A549 (cell line): ENCODE measurements at regions of chr5 and their contacts with region 1.

Region 1: GRCh38 chr5:138282920-138283742 is 8.7 kb upstream of the GFRA3 start:
- DNase-seq: peak; percentile 44 to 76
- ATAC-seq: peak; percentile 97 to 98
- H3K4me3 ChIP-seq: no peak overlapping the region
- H3K27ac ChIP-seq: no peak overlapping the region
- H3K4me1 ChIP-seq: peaks cover 9% of the 10 kb centered on the region; the same call in 2 of the 3 replicates
- CTCF ChIP-seq: peak; percentile 61
- EP300 ChIP-seq: no peak
- POLR2A ChIP-seq: no peak
- RAD21 ChIP-seq: peak; percentile 65 to 79

Region 2: GRCh38 chr5:138178516-138179276 is 104.4 kb before region 1 on chr5 and contains the starts of genes BRD8 and KIF20A:
- CTCF ChIA-PET with region 1: interaction called, 41 read pairs
- POLR2A ChIA-PET with region 1: interaction called, 4 read pairs
- DNase-seq: peak; percentile 96 to 97
- ATAC-seq: peak; percentile 92 to 94
- H3K4me3 ChIP-seq: peak within 1 kb of the TSS; percentile 80
- H3K27ac ChIP-seq: peak within 1 kb of the TSS; percentile 76 to 92
- H3K4me1 ChIP-seq: peaks cover 15% of the 10 kb centered on the region
- CTCF ChIP-seq: no peak
- EP300 ChIP-seq: no peak
- POLR2A ChIP-seq: peak; percentile 80
- RAD21 ChIP-seq: no peak
- polyA plus RNA-seq, gene BRD8: 82.3 and 85.8 TPM in 2 replicates
- polyA plus RNA-seq, gene KIF20A: 37.4 and 42.2 TPM in 2 replicates

Region 3: GRCh38 chr5:138185957-138186447 is 97.1 kb before region 1 on chr5:
- CTCF ChIA-PET with region 1: interaction called, 41 read pairs
- POLR2A ChIA-PET with region 1: interaction called, 3 read pairs
- DNase-seq: no peak
- ATAC-seq: no peak
- H3K4me3 ChIP-seq: no peak overlapping the region
- H3K27ac ChIP-seq: no peak overlapping the region
- H3K4me1 ChIP-seq: no peaks in the 10 kb centered on the region
- CTCF ChIP-seq: no peak
- EP300 ChIP-seq: no peak
- POLR2A ChIP-seq: no peak
- RAD21 ChIP-seq: no peak

Region 4: DNA sequence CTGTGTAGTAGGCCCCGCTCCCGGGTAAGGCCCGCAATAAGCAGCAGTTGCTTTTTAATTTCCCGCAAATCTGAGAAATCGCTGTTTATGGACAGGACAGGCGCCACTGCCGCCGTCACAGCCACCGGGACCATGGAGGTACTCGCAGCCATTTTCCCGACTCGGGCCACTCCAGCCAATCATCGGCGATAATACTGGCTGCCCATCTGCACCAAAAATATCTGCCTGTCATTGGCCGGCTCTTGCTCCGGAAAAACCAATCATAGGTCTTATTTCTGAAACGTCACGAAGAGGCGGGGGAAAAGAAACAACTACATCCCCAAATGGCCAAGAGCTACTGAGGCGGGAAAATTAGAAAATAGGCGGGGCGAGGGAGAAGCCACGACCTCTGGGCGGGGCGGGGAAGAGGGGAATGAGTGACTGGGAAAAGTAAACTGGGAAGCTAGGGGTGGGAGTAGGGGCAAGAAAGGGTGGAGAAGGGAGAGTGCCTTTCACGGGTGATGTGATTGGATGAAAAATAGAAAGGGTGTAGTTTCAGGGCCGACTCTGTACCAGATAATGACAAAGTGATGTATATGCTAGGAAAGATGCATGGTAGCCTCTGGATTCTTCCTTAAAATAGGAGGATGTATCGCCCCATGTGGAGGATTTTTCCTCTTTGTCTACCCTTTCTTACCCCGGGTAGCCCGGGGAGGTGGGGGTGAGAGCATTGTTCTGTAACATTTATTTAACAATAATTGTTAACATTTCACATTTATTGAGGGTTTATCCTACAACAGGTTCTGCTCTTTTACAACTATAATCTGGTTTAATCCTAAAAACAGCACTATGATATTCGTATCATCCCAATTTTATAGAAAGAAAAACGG is 69.7 kb before region 1 on chr5 and contains the start of gene CDC23:
- CTCF ChIA-PET with region 1: interaction called, 11 read pairs
- POLR2A ChIA-PET with region 1: interaction called, 5 read pairs
- DNase-seq: peak; percentile 99 to 100
- ATAC-seq: peak; percentile 98 to 99
- H3K4me3 ChIP-seq: peak within 1 kb of the TSS; percentile 85
- H3K27ac ChIP-seq: peak within 1 kb of the TSS; percentile 80 to 91
- H3K4me1 ChIP-seq: peaks cover 6% of the 10 kb centered on the region; the same call in 2 of the 3 replicates
- CTCF ChIP-seq: no peak
- EP300 ChIP-seq: no peak
- POLR2A ChIP-seq: peak; percentile 60
- RAD21 ChIP-seq: no peak
- polyA plus RNA-seq, gene CDC23: 61.7 and 70.3 TPM in 2 replicates

Region 5: DNA sequence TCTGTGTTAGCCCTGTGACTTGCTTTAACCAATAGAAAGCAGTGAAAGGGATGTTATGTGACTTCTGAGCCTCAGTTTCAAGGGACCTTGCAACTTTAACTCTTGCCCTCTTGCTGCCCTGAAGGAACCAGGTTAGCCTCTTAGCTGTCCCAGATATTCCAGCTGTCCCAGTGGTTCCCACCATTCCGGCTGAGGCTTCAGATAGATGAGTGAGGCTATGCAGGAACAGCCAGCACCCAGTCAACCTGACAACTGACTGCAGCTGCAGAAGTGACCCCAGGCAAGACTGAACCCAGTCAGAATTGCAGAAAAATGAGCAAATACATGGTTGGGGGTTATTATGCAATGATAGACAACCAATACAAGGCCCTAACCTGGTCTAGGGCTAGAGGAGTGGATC is 59.6 kb before region 1 on chr5:
- CTCF ChIA-PET with region 1: interaction called, 86 read pairs
- POLR2A ChIA-PET with region 1: no interaction called
- DNase-seq: no peak
- ATAC-seq: peak; percentile 19 to 61; a peak in 5 of 6 replicates
- H3K4me3 ChIP-seq: no peak overlapping the region
- H3K27ac ChIP-seq: no peak overlapping the region
- H3K4me1 ChIP-seq: no peaks in the 10 kb centered on the region
- CTCF ChIP-seq: no peak
- EP300 ChIP-seq: no peak
- POLR2A ChIP-seq: no peak
- RAD21 ChIP-seq: no peak

Region 6: DNA sequence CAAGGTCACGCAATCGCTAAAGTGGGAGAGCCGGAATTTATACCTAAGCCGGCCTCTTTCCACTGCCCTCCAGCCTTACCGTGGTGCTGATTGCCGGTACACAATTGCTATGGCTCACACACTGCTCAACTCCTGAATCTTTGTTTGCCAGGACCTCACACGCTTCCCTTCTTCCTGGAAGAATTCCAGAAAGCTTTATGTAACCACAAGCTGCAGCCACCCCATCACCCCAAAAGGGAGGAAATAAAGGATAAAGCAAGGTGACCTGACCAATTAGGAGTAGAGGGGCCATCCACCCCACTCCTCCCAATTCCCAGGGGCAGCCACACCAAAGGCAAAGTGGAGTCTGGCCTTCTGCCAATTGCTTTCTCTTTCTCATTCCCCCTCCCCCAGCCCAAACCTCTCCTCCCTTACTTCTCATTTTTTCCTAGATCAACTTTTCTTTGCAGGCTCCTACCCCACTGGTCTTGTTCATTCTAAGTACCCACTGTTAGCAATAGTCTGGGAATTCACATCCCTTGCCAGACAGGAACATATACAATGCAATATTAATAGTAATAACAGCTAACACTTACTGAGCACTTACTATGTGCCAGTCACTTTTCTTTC is 52.0 kb before region 1 on chr5:
- CTCF ChIA-PET with region 1: interaction called, 18 read pairs
- POLR2A ChIA-PET with region 1: no interaction called
- DNase-seq: peak in 1 of 2 experiments; percentile 57
- ATAC-seq: peak; percentile 81
- H3K4me3 ChIP-seq: no peak overlapping the region
- H3K27ac ChIP-seq: peak overlapping the region; percentile 29 to 71; a peak in 5 of 6 replicates
- H3K4me1 ChIP-seq: peaks cover 16% of the 10 kb centered on the region
- CTCF ChIP-seq: no peak
- EP300 ChIP-seq: peak in 1 of 2 experiments; percentile 47; a peak in 1 of 5 replicates
- POLR2A ChIP-seq: no peak
- RAD21 ChIP-seq: no peak